ENCODE measurements at regions of chr5 and their contacts with region 1.

Region 1: GRCh38 chr5:80481019-80481893 is 6.6 kb upstream of the FAM151B start:
- DNase-seq: peak; percentile 60
- H3K4me3 ChIP-seq: no peak overlapping the region
- H3K27ac ChIP-seq: no peak overlapping the region
- H3K4me1 ChIP-seq: no peaks in the 10 kb centered on the region
- H3K27me3 ChIP-seq: no peaks in the 10 kb centered on the region
- CTCF ChIP-seq: peak; percentile 68

Region 2: GRCh38 chr5:80654391-80655230 is 173.4 kb after region 1 on chr5 and contains the starts of genes DHFR and MSH3:
- intact Hi-C with region 1: loop called (anchors 5 kb)
- DNase-seq: peak; percentile 90
- H3K4me3 ChIP-seq: peak within 1 kb of the TSS; percentile 83
- H3K27ac ChIP-seq: peak within 1 kb of the TSS; percentile 99
- H3K4me1 ChIP-seq: no peaks in the 10 kb centered on the region
- H3K27me3 ChIP-seq: no peaks in the 10 kb centered on the region
- CTCF ChIP-seq: no peak
- total RNA-seq, gene DHFR: 26.5 to 77.7 TPM
- total RNA-seq, gene MSH3: 15.1 to 16.3 TPM

Region 3: DNA sequence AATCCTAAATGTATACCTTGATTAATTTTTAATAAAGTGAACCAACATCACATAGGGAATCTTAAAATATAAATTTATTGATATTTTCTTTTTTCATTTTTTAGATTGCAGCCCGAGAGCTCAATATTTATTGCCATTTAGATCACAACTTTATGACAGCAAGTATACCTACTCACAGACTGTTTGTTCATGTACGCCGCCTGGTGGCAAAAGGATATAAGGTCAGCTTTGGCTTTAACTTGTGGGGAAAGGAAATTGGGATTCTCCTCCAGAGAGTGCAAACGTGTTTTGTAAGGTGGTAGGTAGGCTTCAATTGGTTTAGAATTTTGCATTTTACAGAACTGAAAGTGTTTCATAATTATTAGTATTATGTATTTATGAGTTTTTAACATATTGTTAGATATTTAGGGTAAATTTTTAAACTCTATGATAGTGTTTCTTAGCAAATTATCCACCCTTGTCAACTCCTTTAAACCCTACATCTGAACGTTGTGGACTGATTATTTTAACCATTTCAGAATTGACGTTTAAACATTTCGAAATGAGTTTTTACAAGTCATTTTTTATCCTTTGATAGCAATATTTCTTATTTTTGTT is 191.0 kb after region 1 on chr5:
- intact Hi-C with region 1: loop called (anchors 5 kb)
- DNase-seq: peak; percentile 81
- H3K4me3 ChIP-seq: no peak overlapping the region
- H3K27ac ChIP-seq: no peak overlapping the region
- H3K4me1 ChIP-seq: no peaks in the 10 kb centered on the region
- H3K27me3 ChIP-seq: no peaks in the 10 kb centered on the region
- CTCF ChIP-seq: peak; percentile 83

Region 4: GRCh38 chr5:80707645-80708044 is 226.4 kb after region 1 on chr5:
- intact Hi-C with region 1: no loop called
- DNase-seq: no peak
- H3K4me3 ChIP-seq: no peak overlapping the region
- H3K27ac ChIP-seq: no peak overlapping the region
- H3K4me1 ChIP-seq: no peaks in the 10 kb centered on the region
- H3K27me3 ChIP-seq: no peaks in the 10 kb centered on the region
- CTCF ChIP-seq: no peak

Measured in colonic mucosa (tissue), 4 donors.